ENCODE measurements at regions of chr7 and their contacts with region 1.

Region 1: GRCh38 chr7:101688183-101688831 is 59.2 kb upstream of the MYL10 start:
- DNase-seq: peak; percentile 90
- ATAC-seq: peak; percentile 94
- H3K4me3 Mint-ChIP-seq: no peak overlapping the region
- H3K27ac Mint-ChIP-seq: no peak overlapping the region
- H3K4me1 Mint-ChIP-seq: no peaks in the 10 kb centered on the region
- H3K27me3 Mint-ChIP-seq: peaks cover 5% of the 10 kb centered on the region

Region 2: DNA sequence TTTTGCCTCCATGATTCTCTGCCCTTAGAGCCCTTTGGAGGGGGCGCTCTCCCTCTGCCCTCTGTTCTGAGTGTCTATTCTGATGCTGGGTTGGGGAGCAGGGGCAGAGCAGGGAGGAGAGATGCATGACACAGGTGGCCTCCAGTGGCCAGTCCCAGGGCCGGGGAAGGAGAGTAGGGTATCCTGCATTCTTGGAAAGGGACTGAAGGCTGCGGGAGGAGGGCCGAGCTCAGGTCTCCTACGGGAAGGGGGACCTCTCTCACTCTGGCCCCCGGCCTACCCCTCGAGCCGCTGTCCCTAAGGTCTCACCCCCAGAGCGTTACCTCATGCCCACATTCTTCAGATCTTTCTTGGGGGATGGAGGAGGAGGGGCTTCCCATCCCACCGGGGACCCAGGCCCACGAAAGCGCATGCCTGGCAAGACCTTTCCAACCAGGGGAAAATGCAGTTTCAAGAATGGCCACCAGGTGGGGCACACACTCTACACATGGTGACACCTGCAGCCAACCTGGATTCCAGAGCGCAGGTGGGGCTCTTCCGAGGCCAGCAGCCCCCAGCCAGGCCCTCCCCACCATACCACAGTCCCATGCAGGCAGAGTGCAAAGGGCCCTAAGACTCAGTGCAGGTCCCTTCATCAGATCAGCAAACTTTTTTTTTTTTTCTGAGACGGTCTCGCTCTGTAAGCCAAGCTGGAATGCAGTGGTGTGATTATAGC is 145.6 kb before region 1 on chr7:
- CTCF ChIA-PET with region 1: interaction called, 5 read pairs
- POLR2A ChIA-PET with region 1: no interaction called
- intact Hi-C with region 1: loop called in 1 of 2 experiments (anchors 2 kb)
- DNase-seq: peak; percentile 85
- ATAC-seq: no peak
- H3K4me3 Mint-ChIP-seq: no peak overlapping the region
- H3K27ac Mint-ChIP-seq: no peak overlapping the region
- H3K4me1 Mint-ChIP-seq: no peaks in the 10 kb centered on the region
- H3K27me3 Mint-ChIP-seq: peaks cover 3% of the 10 kb centered on the region

Region 3: GRCh38 chr7:101717628-101718357 is 29.5 kb after region 1 on chr7:
- CTCF ChIA-PET with region 1: no interaction called
- POLR2A ChIA-PET with region 1: no interaction called
- intact Hi-C with region 1: no loop called
- DNase-seq: no peak
- ATAC-seq: no peak
- H3K4me3 Mint-ChIP-seq: no peak overlapping the region
- H3K27ac Mint-ChIP-seq: no peak overlapping the region
- H3K4me1 Mint-ChIP-seq: no peaks in the 10 kb centered on the region
- H3K27me3 Mint-ChIP-seq: no peaks in the 10 kb centered on the region

Region 4: DNA sequence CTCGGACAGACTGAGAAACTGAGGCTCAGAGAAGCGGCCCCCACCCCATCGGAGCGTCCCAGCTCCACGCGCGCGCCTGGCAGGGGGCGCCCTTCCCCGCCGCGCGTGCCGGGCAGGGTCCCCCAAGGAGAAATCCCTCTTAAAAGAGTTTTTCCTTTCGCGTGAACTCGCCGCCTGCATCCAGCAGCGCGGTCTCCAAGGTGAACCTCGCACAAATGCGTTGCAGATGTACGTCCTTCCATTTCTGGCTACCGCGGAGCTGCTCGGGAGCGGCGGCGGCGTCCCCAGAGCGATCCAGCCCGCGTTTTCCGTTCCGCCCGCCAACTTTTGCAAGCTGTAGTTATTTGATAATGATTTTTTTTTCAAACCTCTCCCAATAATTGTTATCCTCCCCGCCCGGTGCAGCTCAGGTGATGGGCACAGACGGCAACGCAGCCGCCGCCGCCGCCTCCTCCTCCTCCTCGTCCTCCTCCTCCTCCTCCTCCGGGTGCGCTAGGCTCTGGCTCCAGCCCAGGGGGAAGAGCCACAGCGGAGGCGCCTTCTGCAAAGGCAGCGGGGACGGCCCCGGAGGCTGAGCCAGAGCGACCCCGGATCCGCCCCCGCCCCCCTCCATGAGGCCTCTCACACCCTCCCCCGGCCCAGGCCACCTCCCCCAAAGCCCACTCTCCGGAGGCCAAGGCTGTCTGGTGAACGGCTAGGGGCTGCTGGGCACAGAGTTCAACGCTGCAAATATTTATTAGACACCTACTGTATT is 55.1 kb after region 1 on chr7:
- CTCF ChIA-PET with region 1: interaction called, 3 read pairs
- POLR2A ChIA-PET with region 1: no interaction called
- intact Hi-C with region 1: loop called in 1 of 2 experiments (anchors 2 kb)
- DNase-seq: peak; percentile 77
- ATAC-seq: peak; percentile 71
- H3K4me3 Mint-ChIP-seq: peak overlapping the region; percentile 67
- H3K27ac Mint-ChIP-seq: no peak overlapping the region
- H3K4me1 Mint-ChIP-seq: peaks cover 10% of the 10 kb centered on the region
- H3K27me3 Mint-ChIP-seq: peaks cover 3% of the 10 kb centered on the region

Region 5: DNA sequence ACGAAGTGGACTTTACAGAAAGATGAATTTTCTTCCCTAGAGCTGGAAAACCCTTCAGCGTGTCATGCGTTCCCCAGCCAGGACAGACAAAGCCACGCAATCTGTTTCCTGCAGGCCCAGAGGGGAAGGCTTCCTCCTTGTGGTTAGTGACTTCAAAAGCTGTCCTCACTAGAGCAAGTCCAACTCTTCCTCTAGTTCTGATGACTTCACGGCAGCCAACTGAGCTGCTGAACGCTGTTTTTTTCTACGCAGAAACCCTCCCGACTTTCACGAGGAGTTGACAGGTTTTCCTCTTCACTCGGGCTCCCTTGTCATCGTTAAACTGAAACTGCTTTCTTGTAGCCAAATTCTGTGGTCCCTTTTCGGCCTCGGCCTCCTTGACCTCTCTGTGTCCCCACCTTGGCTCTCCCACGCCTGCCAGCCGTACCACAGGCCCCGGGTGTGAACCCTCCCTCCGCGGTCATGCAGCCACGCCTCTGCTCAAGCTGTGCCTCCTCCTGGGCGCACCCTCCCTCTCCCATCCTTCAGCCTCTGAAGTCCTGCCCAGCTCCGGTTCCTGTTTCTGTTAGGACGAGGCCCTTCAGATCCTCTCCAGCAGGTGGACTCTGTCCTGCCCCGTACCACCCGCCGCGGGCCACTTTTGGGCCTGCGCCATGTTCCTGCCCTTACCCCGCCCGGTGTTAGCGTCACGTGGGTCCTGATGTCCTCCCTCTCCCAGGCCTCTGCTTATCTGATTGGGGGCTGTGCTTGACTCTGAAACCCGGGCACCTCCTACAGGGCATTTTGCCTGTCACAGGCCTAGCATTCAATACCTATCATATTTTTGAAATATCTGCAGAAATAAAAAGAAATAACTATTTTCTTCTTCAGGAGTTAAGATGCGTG is 168.4 kb after region 1 on chr7:
- CTCF ChIA-PET with region 1: no interaction called
- POLR2A ChIA-PET with region 1: no interaction called
- intact Hi-C with region 1: loop called in 1 of 2 experiments (anchors 1 kb)
- DNase-seq: peak; percentile 89
- ATAC-seq: peak; percentile 91
- H3K4me3 Mint-ChIP-seq: peak overlapping the region; percentile 85
- H3K27ac Mint-ChIP-seq: peak overlapping the region; percentile 97
- H3K4me1 Mint-ChIP-seq: peaks cover 42% of the 10 kb centered on the region
- H3K27me3 Mint-ChIP-seq: no peaks in the 10 kb centered on the region

Region 6: DNA sequence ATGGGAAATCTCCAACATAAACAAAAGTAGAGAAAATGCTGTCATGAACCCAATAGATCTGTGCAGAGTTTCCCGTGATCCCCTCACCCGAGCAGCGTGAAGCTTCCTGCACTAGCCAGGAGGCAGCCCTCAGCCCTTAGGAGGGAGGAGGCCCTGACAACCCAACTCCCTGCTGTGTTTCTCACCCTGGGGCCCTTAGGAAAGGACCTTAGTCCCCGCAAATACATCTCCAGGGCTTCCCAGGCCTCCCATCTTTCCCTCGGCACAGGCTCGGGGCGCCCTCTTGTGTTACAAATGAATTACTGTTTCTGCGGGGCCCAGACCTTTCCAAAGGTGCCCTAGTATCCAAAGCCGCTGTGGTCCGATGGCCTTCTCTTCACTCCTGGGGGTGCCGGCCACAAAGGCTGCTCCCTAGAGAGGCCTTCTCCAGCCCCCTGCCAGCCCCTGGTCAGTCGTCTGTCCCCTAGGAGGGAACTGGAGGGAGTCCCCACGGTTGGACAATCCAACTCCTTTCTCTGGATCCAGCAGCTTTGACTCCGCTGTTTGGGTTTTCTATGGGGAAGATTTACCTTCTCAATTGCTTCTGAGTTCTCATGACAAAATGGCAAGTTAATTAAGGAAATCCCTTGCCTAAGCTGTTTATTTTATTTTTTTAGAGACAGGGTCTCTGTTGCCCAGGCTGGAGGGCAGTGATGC is 548.4 kb after region 1 on chr7:
- CTCF ChIA-PET with region 1: interaction called, 3 read pairs
- POLR2A ChIA-PET with region 1: no interaction called
- intact Hi-C with region 1: loop called (anchors 1 kb)
- DNase-seq: peak; percentile 73
- ATAC-seq: peak; percentile 77
- H3K4me3 Mint-ChIP-seq: no peak overlapping the region
- H3K27ac Mint-ChIP-seq: no peak overlapping the region
- H3K4me1 Mint-ChIP-seq: no peaks in the 10 kb centered on the region
- H3K27me3 Mint-ChIP-seq: no peaks in the 10 kb centered on the region

Region 7: DNA sequence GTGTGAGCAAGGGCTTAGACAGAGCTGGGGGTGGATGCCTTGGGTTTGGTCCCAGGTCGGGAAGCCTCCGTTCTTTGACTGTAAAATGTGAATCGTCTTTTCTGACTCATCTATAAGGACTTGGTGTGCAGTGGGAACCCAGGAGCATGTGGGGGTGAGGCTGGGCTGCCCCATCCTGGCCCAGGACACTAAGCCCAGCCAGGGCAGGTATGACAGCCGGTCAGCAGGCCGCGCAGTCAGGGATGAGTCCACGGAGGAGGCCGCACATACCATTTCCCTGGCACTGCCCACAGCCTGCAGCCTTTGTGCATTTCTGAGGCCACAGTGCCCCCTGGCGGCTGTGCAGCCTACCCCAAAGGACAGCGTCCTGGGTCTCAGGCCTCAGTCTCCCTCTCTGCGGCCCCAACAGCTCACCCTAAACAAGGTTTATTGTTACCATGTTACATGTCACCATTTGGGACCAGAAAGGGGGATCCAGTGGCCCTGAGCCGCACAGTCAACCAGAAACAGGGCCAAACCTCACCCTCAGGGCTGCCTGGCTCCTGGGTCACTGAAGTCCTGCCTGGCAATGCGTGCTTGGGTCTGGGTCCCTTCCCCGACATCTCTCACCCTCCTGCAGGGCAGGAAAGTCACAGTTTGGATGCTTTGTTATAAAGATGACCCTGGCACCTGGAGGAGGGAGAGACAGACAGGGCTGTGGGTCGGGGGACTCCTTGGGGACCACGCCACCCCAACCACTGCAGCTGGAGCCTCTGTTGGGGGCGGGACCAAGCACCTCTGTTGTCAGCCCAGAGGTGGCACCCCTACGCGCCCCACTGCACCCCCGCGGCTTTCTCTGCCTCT is 584.0 kb after region 1 on chr7:
- CTCF ChIA-PET with region 1: interaction called, 3 read pairs
- POLR2A ChIA-PET with region 1: no interaction called
- intact Hi-C with region 1: loop called (anchors 1 to 5 kb)
- DNase-seq: peak; percentile 88
- ATAC-seq: peak; percentile 90
- H3K4me3 Mint-ChIP-seq: no peak overlapping the region
- H3K27ac Mint-ChIP-seq: no peak overlapping the region
- H3K4me1 Mint-ChIP-seq: peaks cover 2% of the 10 kb centered on the region
- H3K27me3 Mint-ChIP-seq: no peaks in the 10 kb centered on the region

Measured in activated CD4-positive, alpha-beta T cell treated with anti-CD3 and anti-CD28 coated beads for 36 hours (primary cell).